HCT116 (cell line): ENCODE measurements at regions of chr2 and their contacts with region 1.

Region 1: GRCh38 chr2:128027801-128028667 is at the start of gene SAP130:
- DNase-seq: peak; percentile 79
- ATAC-seq: peak; percentile 83
- H3K4me3 ChIP-seq: peak within 1 kb of the TSS; percentile 86 to 92
- H3K27ac ChIP-seq: peak within 1 kb of the TSS; percentile 70
- H3K4me1 ChIP-seq: peaks cover 3 to 10% of the 10 kb centered on the region in 2 experiments; a peak in 3 of 4 replicates
- H3K27me3 ChIP-seq: no peaks in the 10 kb centered on the region
- CTCF ChIP-seq: no peak
- POLR2A ChIP-seq: no peak
- RAD21 ChIP-seq: no peak
- total RNA-seq, gene SAP130: 29.5 TPM

Region 2: GRCh38 chr2:127884436-127885345 is 143.3 kb before region 1 on chr2:
- CTCF ChIA-PET with region 1: no interaction called
- POLR2A ChIA-PET with region 1: no interaction called
- RAD21 ChIA-PET with region 1: no interaction called
- intact Hi-C with region 1: loop called (anchors 10 kb)
- DNase-seq: no peak
- ATAC-seq: no peak
- H3K4me3 ChIP-seq: peak overlapping the region; percentile 60 to 66
- H3K27ac ChIP-seq: peak overlapping the region; percentile 36
- H3K4me1 ChIP-seq: peaks cover 10 to 17% of the 10 kb centered on the region in 2 experiments; a peak in 3 of 4 replicates
- H3K27me3 ChIP-seq: no peaks in the 10 kb centered on the region
- CTCF ChIP-seq: no peak
- POLR2A ChIP-seq: no peak
- RAD21 ChIP-seq: no peak

Region 3: GRCh38 chr2:128090945-128091725 is 63.1 kb after region 1 on chr2 and contains the start of gene UGGT1:
- CTCF ChIA-PET with region 1: no interaction called
- POLR2A ChIA-PET with region 1: no interaction called
- RAD21 ChIA-PET with region 1: no interaction called
- intact Hi-C with region 1: loop called (anchors 5 kb)
- DNase-seq: peak; percentile 95
- ATAC-seq: peak; percentile 94
- H3K4me3 ChIP-seq: peak within 1 kb of the TSS; percentile 96 to 100
- H3K27ac ChIP-seq: peak within 1 kb of the TSS; percentile 77
- H3K4me1 ChIP-seq: peaks cover 4 to 11% of the 10 kb centered on the region in 2 experiments; a peak in 2 of 4 replicates
- H3K27me3 ChIP-seq: no peaks in the 10 kb centered on the region
- CTCF ChIP-seq: no peak
- POLR2A ChIP-seq: peak; percentile 79
- RAD21 ChIP-seq: no peak
- total RNA-seq, gene UGGT1: 51.8 TPM